ENCODE measurements at regions of chr10 and their contacts with region 1.

Region 1: GRCh38 chr10:109883859-109884771 is 39.2 kb downstream of the XPNPEP1 start:
- DNase-seq: peak; percentile 66 to 77
- ATAC-seq: peak; percentile 71 to 91 (median 76)
- H3K4me3 ChIP-seq: no peak overlapping the region
- H3K27ac ChIP-seq: peak overlapping the region; percentile 38
- H3K4me1 ChIP-seq: peaks cover 17% of the 10 kb centered on the region
- H3K27me3 ChIP-seq: no peaks in the 10 kb centered on the region
- CTCF ChIP-seq: peak; percentile 96

Region 2: DNA sequence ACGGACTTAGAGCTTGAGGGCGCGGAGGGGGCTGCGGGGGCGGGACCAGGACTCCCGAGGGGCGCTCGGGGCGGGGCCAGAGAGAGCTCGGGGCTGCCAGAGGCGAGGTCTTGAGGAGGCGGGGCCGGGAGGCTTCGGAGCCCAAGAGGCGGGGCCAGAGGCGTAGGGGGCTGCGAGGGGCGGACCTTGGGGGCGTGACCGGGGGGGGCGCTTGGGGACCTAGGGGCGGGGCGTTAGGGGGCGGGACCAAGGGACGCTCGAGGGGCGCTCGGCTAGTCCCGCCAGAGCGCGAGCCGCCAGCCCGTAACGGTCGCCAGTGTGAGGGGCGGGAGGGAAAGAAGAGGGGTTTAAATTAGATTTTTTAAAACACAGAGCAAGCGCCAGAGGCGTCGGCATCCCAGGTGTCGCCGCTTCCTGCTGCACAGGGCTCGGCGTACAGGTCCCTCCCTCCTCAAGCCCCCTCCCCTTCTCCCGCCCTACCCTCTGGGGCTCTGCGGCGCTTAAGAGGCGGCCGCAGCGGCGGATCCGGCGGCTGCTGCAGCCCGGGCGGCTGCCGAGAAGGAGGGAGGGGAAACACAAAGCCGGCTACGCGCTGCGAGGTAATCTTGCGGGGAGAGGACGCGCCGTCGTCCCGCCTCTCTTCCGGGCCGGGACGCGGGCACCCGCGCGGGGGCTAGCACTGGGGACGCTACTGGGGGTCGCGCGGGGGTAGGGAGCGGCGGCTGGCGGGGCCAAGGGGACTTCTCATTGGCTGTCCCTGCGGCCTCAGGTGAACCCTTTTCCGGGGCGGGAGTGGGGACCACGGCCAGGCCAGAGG is 123.8 kb after region 1 on chr10 and contains the start of gene ADD3:
- intact Hi-C with region 1: loop called in 1 of 2 experiments (anchors 5 kb)
- DNase-seq: peak; percentile 94 to 96
- ATAC-seq: peak; percentile 93 to 95 (median 94)
- H3K4me3 ChIP-seq: peak within 1 kb of the TSS; percentile 99
- H3K27ac ChIP-seq: peak within 1 kb of the TSS; percentile 83
- H3K4me1 ChIP-seq: peaks cover 28% of the 10 kb centered on the region
- H3K27me3 ChIP-seq: no peaks in the 10 kb centered on the region
- CTCF ChIP-seq: no peak
- total RNA-seq, gene ADD3: 8.0 to 26.3 (median 14.0) TPM

Region 3: DNA sequence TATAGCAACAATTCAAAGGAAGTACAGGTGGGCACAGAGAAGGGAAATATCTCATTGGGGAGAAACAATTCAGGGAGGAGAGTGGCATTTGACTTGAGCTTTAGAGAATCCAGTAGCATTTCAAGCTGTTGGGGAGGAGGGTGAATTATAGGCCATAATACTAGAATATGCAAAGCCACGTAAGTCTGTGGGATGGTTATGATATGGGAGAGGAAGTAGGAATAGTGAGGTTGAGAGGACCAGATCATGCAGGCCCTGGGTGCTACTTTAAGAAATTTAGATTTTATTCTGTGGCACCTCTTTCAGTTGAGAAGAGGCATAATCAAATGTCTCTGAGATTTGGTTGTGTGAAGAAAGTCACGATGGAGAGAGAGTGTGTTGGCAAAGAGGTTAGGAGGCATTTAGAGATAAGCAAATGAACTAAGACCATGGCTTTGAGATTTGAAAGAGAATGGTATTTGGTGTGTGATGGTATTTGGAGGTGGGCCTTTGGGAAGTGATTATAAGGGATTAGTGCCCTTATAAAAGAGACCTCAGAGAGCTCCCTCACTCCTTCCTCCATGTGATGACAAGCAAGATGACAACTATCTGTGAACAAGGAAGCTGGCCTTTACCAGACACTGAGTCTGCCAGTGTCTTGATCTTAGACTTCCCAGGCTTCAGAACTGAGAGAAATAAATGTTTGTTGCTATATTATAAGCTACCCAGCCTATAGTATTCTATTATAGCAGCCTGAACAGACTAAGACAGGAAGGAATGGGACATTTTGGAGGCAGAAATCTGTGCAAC is 138.8 kb after region 1 on chr10:
- intact Hi-C with region 1: loop called in 1 of 2 experiments (anchors 5 kb)
- DNase-seq: no peak
- ATAC-seq: no peak
- H3K4me3 ChIP-seq: no peak overlapping the region
- H3K27ac ChIP-seq: no peak overlapping the region
- H3K4me1 ChIP-seq: no peaks in the 10 kb centered on the region
- H3K27me3 ChIP-seq: no peaks in the 10 kb centered on the region
- CTCF ChIP-seq: no peak

Region 4: GRCh38 chr10:110067960-110068770 is 184.1 kb after region 1 on chr10:
- intact Hi-C with region 1: no loop called
- DNase-seq: no peak
- ATAC-seq: no peak
- H3K4me3 ChIP-seq: no peak overlapping the region
- H3K27ac ChIP-seq: peak overlapping the region; percentile 7
- H3K4me1 ChIP-seq: peaks cover 34% of the 10 kb centered on the region
- H3K27me3 ChIP-seq: no peaks in the 10 kb centered on the region
- CTCF ChIP-seq: no peak

Region 5: GRCh38 chr10:110110338-110110737 is 226.2 kb after region 1 on chr10:
- intact Hi-C with region 1: loop called in 1 of 2 experiments (anchors 10 kb)
- DNase-seq: no peak
- ATAC-seq: no peak
- H3K4me3 ChIP-seq: no peak overlapping the region
- H3K27ac ChIP-seq: no peak overlapping the region
- H3K4me1 ChIP-seq: no peaks in the 10 kb centered on the region
- H3K27me3 ChIP-seq: no peaks in the 10 kb centered on the region
- CTCF ChIP-seq: no peak

Region 6: GRCh38 chr10:110210674-110211464 is 326.8 kb after region 1 on chr10:
- intact Hi-C with region 1: loop called in 1 of 2 experiments (anchors 10 kb)
- DNase-seq: peak; percentile 94 to 99
- ATAC-seq: peak; percentile 91 to 93 (median 92)
- H3K4me3 ChIP-seq: peak overlapping the region; percentile 94
- H3K27ac ChIP-seq: peak overlapping the region; percentile 98
- H3K4me1 ChIP-seq: peaks cover 18% of the 10 kb centered on the region
- H3K27me3 ChIP-seq: no peaks in the 10 kb centered on the region
- CTCF ChIP-seq: no peak

Region 7: DNA sequence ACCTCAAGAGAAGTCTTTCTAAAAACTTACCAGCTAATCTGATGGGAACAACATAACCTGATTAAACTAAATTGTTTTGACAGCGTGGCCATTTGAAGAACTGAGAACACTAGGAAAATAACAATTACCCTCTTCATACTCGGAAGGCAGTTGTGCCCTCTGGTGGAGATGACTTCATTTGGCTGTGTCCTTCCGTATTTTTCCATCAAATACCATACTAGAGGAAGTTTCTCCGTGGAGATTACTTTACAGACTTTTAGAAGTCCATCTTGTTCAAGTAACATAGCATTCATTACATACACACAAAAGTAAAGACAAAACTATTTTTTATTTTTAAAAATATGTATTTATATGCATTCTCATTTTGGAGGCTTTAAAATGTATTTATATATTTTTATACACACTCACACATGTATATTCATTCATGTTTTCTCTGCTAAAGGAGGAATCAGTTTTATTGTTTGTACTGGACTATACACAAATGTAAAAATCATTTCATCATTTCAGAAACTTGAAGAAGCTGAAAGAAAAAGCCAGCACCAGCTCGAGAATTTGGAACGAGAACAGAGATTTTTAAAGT is 395.4 kb after region 1 on chr10:
- intact Hi-C with region 1: loop called (anchors 10 kb)
- DNase-seq: peak in 1 of 2 donors; percentile 30
- ATAC-seq: peak in 3 of 4 donors; percentile 71 to 87 (median 79)
- H3K4me3 ChIP-seq: no peak overlapping the region
- H3K27ac ChIP-seq: no peak overlapping the region
- H3K4me1 ChIP-seq: peaks cover 39% of the 10 kb centered on the region
- H3K27me3 ChIP-seq: no peaks in the 10 kb centered on the region
- CTCF ChIP-seq: peak; percentile 77

Measured in psoas muscle (tissue), 8 donors.